ENCODE measurements at regions of chr2 and their contacts with region 1.

Region 1: GRCh38 chr2:216108967-216109921 is at the start of gene XRCC5:
- DNase-seq: peak; percentile 81 to 97 (median 91)

Region 2: GRCh38 chr2:216001216-216002100 is 107.8 kb before region 1 on chr2:
- intact Hi-C with region 1: no loop called
- DNase-seq: no peak

Region 3: GRCh38 chr2:216081487-216082116 is 27.6 kb before region 1 on chr2 and contains the starts of genes PECR and TMEM169:
- intact Hi-C with region 1: loop called (anchors 2 kb)
- DNase-seq: peak; percentile 73 to 94 (median 88)